CD4-positive, alpha-beta memory T cell (primary cell): ENCODE measurements at regions of chr9 and their contacts with region 1.

Region 1: GRCh38 chr9:93566408-93567270 is 9.7 kb upstream of the PHF2 start:
- DNase-seq: peak; percentile 95 to 99 (median 98)
- H3K4me3 ChIP-seq: peak overlapping the region; percentile 30 to 65
- H3K4me3 Mint-ChIP-seq: peak overlapping the region; percentile 79 to 89 (median 83)
- H3K27ac ChIP-seq: peak overlapping the region; percentile 90
- H3K27ac Mint-ChIP-seq: peak overlapping the region; percentile 87 to 97 (median 93)
- H3K4me1 ChIP-seq: peaks cover 25% of the 10 kb centered on the region
- H3K4me1 Mint-ChIP-seq: peaks cover 9 to 29% (median 21%) of the 10 kb centered on the region in 4 donors
- H3K27me3 ChIP-seq: no peaks in the 10 kb centered on the region
- H3K27me3 Mint-ChIP-seq: no peaks in the 10 kb centered on the region

Region 2: DNA sequence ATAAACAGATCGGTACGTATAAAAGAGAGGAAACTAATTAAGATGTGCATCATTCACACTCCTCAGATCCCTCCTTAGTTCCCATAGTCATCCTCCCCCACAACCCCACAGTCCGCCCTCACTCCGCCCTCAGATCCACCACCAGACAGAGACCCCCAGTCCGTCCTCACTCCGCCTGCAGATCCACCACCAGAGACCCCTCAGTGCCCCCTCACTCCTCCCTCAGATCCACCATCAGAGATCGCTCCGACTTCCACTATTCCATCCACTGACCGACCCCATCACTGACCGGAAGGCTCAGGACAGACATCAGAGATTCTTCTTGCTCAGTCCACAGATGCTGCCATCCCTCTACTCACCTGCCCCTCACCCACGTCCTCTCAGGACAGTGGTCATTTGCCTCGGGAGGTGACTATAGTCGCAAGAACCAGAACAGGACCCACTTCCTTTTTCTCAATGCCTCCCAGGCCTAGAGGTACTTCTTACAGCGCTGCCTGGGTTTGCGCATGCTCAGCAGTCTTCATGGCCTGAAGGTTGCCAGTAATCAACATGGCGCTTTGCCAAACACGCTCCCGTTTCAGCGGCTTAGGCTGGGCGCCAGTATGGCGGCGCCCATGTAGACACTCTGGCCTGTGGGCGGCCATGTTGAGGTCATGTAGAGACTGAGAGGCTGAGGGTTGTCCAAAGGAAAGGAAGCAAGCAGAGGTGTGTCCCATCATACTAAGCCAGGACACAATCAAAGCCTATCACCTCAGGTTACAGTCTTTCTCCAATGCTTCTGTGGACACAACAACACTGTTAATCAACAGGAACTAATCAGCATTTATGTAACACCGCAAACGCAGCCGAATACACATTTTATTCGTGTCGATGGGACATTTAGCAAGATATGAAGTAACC is 688.9 kb before region 1 on chr9 and contains the start of gene ZNF484:
- CTCF ChIA-PET with region 1: no interaction called
- POLR2A ChIA-PET with region 1: no interaction called
- intact Hi-C with region 1: loop called (anchors 1 kb)
- DNase-seq: peak; percentile 94 to 97 (median 95)
- H3K4me3 ChIP-seq: peak within 1 kb of the TSS; percentile 81 to 97
- H3K4me3 Mint-ChIP-seq: peak within 1 kb of the TSS; percentile 87 to 100 (median 99)
- H3K27ac ChIP-seq: peak within 1 kb of the TSS; percentile 94
- H3K27ac Mint-ChIP-seq: peak within 1 kb of the TSS; percentile 96 to 100 (median 99)
- H3K4me1 ChIP-seq: peaks cover 35% of the 10 kb centered on the region
- H3K4me1 Mint-ChIP-seq: peaks cover 30 to 48% (median 40%) of the 10 kb centered on the region in 4 donors
- H3K27me3 ChIP-seq: no peaks in the 10 kb centered on the region
- H3K27me3 Mint-ChIP-seq: no peaks in the 10 kb centered on the region
- total RNA-seq, gene ZNF484: 22.6 to 24.7 TPM

Region 3: GRCh38 chr9:93108291-93109041 is 458.2 kb before region 1 on chr9:
- CTCF ChIA-PET with region 1: interaction called, 8 read pairs
- POLR2A ChIA-PET with region 1: interaction called, 3 read pairs
- intact Hi-C with region 1: loop called (anchors 1 kb)
- DNase-seq: peak in 1 of 5 donors; percentile 44
- H3K4me3 ChIP-seq: no peak overlapping the region
- H3K4me3 Mint-ChIP-seq: peak overlapping the region in 2 of 8 donors; percentile 22 to 63
- H3K27ac ChIP-seq: peak overlapping the region; percentile 6
- H3K27ac Mint-ChIP-seq: peak overlapping the region in 4 of 7 donors; percentile 12 to 84 (median 70)
- H3K4me1 ChIP-seq: peaks cover 52% of the 10 kb centered on the region
- H3K4me1 Mint-ChIP-seq: peaks cover 26 to 60% (median 46%) of the 10 kb centered on the region in 4 donors
- H3K27me3 ChIP-seq: no peaks in the 10 kb centered on the region
- H3K27me3 Mint-ChIP-seq: no peaks in the 10 kb centered on the region

Region 4: DNA sequence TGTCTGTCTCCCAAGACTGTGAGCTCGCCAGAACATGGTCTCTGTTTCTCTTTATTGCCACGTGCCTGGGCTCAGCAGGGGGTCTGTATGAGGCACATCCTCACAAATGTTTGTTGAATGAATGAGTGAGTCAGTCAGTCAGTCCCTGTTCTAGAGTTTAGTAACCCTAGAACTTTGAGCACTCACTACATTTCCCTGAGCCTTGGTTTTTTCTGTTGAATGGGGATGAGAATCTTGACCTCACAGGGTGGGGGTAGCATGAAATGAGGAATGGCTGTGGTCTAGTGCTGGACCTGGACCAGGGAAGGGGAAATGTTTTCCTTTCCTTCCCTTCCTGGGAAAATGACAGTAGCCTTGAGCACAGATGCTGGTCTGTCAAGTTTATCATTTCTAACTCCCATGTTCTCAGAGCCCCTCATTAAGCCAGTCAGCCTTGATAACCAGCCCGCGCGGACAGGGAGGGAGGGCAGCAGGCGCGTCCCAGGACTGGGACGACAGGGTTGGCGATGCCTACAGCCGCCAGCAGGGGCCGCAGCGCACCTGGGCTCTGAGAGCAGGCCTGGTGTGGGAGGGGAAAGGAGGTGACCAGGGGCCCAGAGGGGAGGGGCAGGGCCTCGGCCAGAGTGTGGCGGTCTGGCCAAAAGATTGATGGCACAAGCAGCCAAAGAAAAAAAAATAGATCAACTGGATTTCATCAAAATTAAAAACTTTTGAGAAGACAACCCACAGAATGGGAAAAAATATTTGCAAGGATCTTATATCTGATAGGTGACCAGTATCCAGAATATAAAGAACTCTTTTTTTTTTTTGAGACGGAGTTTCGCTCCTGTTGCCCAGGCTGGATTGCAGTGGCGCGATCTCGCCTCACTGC is 406.8 kb before region 1 on chr9:
- CTCF ChIA-PET with region 1: interaction called, 3 read pairs
- POLR2A ChIA-PET with region 1: no interaction called
- intact Hi-C with region 1: loop called (anchors 10 kb)
- DNase-seq: peak; percentile 45 to 58 (median 49)
- H3K4me3 ChIP-seq: no peak overlapping the region
- H3K4me3 Mint-ChIP-seq: no peak overlapping the region
- H3K27ac ChIP-seq: no peak overlapping the region
- H3K27ac Mint-ChIP-seq: peak overlapping the region in 3 of 7 donors; percentile 17 to 66 (median 43)
- H3K4me1 ChIP-seq: peaks cover 14% of the 10 kb centered on the region
- H3K4me1 Mint-ChIP-seq: peaks cover 9 to 17% (median 10%) of the 10 kb centered on the region in 4 donors
- H3K27me3 ChIP-seq: no peaks in the 10 kb centered on the region
- H3K27me3 Mint-ChIP-seq: no peaks in the 10 kb centered on the region

Region 5: GRCh38 chr9:93453047-93453914 is 113.4 kb before region 1 on chr9 and contains the start of gene FAM120AOS:
- CTCF ChIA-PET with region 1: interaction called, 22 read pairs
- POLR2A ChIA-PET with region 1: interaction called, 19 read pairs
- intact Hi-C with region 1: loop called (anchors 1 kb)
- DNase-seq: peak; percentile 79 to 91 (median 80)
- H3K4me3 ChIP-seq: peak within 1 kb of the TSS; percentile 69 to 83
- H3K4me3 Mint-ChIP-seq: peak within 1 kb of the TSS; percentile 93 to 98 (median 96)
- H3K27ac ChIP-seq: peak within 1 kb of the TSS; percentile 69
- H3K27ac Mint-ChIP-seq: peak within 1 kb of the TSS; percentile 88 to 99 (median 97)
- H3K4me1 ChIP-seq: peaks cover 62% of the 10 kb centered on the region
- H3K4me1 Mint-ChIP-seq: peaks cover 36 to 63% (median 51%) of the 10 kb centered on the region in 4 donors
- H3K27me3 ChIP-seq: no peaks in the 10 kb centered on the region
- H3K27me3 Mint-ChIP-seq: no peaks in the 10 kb centered on the region
- total RNA-seq, gene FAM120AOS: 49.7 to 50.8 TPM